HepG2 (cell line): ENCODE measurements at regions of chr22 and their contacts with region 1.

Region 1: DNA sequence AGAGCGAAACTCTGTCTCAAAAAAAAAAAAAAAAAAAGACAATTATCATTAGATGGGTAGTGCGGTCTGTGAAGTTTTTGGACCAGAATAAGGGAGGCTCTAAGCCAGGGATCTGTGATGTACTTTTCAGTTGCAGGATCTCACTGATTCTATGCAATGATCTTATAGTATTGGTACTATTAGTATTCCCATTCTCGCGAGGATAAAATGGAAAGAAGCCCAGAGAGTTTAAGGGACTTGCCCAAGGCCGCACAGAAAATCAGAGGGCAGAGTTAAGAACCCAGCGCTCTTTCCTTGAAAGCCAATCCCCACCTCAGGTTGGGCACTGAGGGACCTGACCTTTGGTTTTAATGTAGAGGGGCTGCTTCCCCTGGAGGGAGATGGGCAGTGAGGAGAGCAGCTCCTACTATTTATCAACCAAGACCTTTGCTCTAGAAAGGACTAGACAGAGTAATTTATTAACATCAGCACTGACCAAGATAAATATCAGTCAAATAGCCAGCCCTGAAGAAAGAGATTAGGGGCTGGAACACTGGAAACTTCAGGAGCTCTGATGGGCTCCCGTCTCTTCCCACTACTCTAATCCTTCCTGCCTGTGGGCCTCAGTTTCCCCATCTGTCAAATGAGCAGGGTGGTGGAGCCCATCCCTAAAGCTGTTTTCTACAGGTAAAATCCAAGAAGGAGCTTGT is 6.0 kb downstream of the NIPSNAP1 start:
- DNase-seq: peak; percentile 81
- ATAC-seq: peak; percentile 85
- H3K4me3 ChIP-seq: peak overlapping the region in 2 of 3 experiments; percentile 45 to 47; a peak in 2 of 6 replicates
- H3K27ac ChIP-seq: peak overlapping the region; percentile 90
- H3K4me1 ChIP-seq: peaks cover 95% of the 10 kb centered on the region
- H3K27me3 ChIP-seq: no peaks in the 10 kb centered on the region
- CTCF ChIP-seq: no peak
- EP300 ChIP-seq: no peak
- POLR2A ChIP-seq: peak; percentile 43 to 52; a peak in 2 of 4 replicates
- RAD21 ChIP-seq: no peak

Region 2: DNA sequence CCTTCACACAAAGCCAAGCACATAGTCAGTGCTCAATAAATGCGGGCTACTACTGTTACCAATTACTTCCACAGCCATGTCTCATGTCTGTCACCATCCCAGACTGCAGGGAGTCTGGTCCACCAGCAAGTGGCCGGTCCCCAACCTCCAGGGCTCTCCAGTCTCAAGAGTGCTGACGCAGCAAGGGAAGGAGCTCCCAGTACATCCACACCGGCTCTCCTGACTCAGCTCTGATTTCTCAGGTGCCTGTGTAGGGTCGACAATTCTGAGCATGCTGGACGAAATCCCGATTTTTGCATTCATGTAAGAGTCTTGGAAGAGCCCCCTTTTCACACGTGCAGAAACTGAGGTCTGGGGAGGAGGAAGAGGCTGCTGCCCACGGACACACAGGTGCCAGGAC is 105.2 kb before region 1 on chr22:
- CTCF ChIA-PET with region 1: no interaction called
- POLR2A ChIA-PET with region 1: no interaction called
- in situ Hi-C with region 1: no loop called
- intact Hi-C with region 1: no loop called
- DNase-seq: no peak
- ATAC-seq: peak; percentile 51
- H3K4me3 ChIP-seq: peak overlapping the region in 2 of 3 experiments; percentile 38 to 68; a peak in 3 of 6 replicates
- H3K27ac ChIP-seq: no peak overlapping the region
- H3K4me1 ChIP-seq: peaks cover 11% of the 10 kb centered on the region; the same call in 1 of the 2 replicates
- H3K27me3 ChIP-seq: peaks cover 12 to 56% of the 10 kb centered on the region in 2 experiments
- CTCF ChIP-seq: no peak
- EP300 ChIP-seq: no peak
- POLR2A ChIP-seq: no peak
- RAD21 ChIP-seq: no peak

Region 3: DNA sequence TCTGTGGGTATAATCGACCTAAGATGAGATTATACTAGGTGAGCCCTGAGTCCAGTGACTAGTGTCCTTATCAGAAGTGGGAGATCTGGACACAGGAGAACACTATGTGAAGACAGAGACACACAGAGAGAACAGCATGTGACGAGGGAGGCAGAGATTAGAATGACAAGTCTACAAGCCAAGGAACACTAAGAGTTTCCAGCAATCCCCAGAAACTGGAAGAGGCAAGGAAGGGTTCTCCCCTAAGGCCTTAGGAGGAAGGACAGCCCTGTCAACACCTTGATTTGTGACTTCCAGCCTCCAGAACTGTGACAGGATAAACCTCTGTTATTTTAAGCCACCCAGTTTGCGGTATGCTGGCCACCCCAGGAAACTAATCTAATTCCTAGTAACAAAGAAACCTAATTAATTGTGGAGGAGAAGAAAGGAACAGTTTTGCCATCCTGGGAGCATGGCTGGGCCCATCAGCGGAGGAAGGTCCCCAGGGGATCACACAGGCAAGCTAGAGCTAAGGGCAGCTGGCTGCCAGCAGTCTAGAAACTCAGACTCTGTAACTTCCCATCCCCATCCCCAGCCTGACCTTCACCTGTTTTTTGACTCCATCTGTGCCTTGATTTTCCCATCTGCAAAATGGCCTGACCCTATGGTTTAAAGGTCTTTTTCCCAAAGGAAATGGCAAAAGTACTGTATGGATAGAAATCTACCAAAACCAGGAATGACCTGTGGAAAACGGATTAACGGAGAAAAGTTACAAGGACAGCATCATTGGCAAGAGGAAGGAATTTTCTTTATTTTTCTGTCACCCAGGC is 11.1 kb before region 1 on chr22:
- CTCF ChIA-PET with region 1: no interaction called
- POLR2A ChIA-PET with region 1: interaction called, 70 read pairs
- in situ Hi-C with region 1: no loop called
- intact Hi-C with region 1: no loop called
- DNase-seq: no peak
- ATAC-seq: no peak
- H3K4me3 ChIP-seq: no peak overlapping the region
- H3K27ac ChIP-seq: no peak overlapping the region
- H3K4me1 ChIP-seq: peaks cover 5% of the 10 kb centered on the region
- H3K27me3 ChIP-seq: no peaks in the 10 kb centered on the region
- CTCF ChIP-seq: no peak
- EP300 ChIP-seq: no peak
- POLR2A ChIP-seq: no peak
- RAD21 ChIP-seq: no peak

Region 4: DNA sequence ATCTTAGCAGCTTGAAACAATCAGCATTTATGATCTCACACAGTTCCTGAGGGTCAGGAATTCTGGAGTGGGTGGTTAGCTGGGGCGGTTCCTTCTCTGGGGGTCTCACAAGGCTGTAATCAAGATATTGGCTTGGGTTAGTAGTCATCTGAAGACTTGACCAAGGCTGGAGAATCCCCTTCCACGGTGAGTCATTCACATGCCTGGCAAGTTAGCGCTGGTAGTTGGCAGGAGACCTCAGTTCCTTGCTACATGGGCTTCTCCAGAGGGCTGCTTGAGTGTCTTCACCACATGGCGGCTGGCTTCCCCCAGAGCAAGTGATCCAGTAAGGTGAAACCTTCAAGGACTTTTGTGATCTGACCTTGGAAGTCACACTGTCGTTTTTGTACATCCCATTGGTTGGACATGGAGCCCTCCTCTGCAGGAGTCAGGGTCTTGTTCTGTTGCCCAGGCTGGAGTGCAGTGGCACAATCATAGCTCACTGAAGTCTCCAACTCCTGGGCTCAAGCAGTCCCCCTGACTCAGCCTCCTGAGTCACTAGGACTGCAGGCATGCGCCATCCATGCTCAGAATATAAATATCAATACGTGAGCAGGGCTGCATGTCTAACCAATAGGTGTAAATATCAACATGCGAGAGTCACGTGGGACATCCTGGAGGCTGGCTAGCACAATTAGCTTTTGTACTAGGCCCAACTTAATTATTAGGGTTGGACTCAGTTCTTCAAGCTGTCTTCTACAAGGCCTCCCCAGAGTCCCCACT is 13.2 kb after region 1 on chr22:
- CTCF ChIA-PET with region 1: no interaction called
- POLR2A ChIA-PET with region 1: interaction called, 22 read pairs
- in situ Hi-C with region 1: no loop called
- intact Hi-C with region 1: no loop called
- DNase-seq: peak; percentile 41
- ATAC-seq: peak; percentile 73
- H3K4me3 ChIP-seq: peak overlapping the region; percentile 8 to 40 (median 31); a peak in 5 of 6 replicates
- H3K27ac ChIP-seq: peak overlapping the region; percentile 10
- H3K4me1 ChIP-seq: peaks cover 46% of the 10 kb centered on the region
- H3K27me3 ChIP-seq: no peaks in the 10 kb centered on the region; a peak in 1 of 5 replicates
- CTCF ChIP-seq: no peak
- EP300 ChIP-seq: no peak
- POLR2A ChIP-seq: no peak
- RAD21 ChIP-seq: no peak